Panc1 (cell line): ENCODE measurements at regions of chr12 and their contacts with region 1.

Region 1: DNA sequence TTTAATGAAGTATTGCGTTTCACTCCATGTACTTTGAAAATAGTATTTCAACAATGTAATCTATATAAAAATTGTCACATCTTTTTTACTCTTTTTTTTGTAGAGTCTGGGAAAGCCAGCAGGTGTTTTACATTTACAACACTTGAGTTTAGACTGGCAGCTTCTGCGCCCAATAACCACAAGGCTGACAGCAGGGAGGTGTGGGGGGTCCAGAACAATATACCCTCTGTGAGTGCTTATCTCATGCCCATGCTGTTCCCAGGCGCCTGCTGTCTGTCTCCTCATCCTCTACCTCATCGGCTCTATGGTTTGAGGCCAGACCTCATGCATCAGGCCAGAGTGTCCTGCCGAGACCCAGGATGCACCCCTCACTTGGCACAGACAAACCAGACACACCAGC is 24.9 kb downstream of the FBRSL1 start:
- DNase-seq: no peak
- ATAC-seq: no peak
- H3K4me3 ChIP-seq: no peak overlapping the region
- H3K27ac ChIP-seq: no peak overlapping the region
- H3K4me1 ChIP-seq: peaks cover 2% of the 10 kb centered on the region
- H3K27me3 ChIP-seq: no peaks in the 10 kb centered on the region
- CTCF ChIP-seq: no peak

Region 2: DNA sequence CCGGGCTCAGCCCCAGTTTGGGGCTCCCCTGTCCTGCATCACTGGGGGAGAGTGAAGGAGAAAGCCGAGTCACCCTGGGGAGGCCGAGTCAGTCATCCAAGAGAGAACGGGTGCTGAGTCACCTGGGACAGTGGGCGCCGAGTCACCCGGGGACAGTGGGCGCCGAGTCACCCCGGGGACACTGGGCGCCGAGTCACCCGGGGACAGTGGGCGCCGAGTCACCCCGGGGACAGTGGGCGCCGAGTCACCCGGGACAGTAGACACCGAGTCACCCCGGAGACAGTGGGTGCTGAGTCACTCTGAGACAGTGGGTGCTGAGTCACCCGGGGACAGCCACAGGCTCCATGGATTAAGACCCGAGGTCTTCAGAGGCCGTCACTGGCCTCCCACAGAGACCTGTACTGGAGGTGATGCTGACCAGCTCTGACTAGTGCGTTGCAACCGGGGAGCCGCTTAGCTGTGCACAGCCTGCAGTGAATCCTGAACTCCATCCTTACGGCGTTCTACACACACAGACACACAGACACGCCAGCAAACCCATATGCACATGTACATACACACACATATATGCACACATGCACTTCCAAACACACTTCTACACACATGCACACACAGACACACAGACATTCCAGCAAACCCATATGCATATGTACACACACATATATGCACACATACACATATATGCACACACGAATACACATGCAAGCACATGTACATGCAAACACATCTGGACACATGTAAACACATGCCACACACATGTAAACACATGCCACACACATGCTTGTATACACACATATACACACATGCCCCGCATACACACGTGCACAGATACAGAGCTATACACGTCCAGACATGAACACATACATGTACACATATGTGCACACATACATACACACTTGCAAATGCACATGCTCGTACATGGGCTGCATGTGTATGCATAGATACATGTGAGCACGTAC is 120.6 kb before region 1 on chr12:
- CTCF ChIA-PET with region 1: no interaction called
- POLR2A ChIA-PET with region 1: no interaction called
- in situ Hi-C with region 1: no loop called
- intact Hi-C with region 1: no loop called
- DNase-seq: no peak
- ATAC-seq: 0 out of 2 replicates have a peak, but pooled peaks have one; percentile 40
- H3K4me3 ChIP-seq: no peak overlapping the region
- H3K27ac ChIP-seq: no peak overlapping the region
- H3K4me1 ChIP-seq: no peaks in the 10 kb centered on the region
- H3K27me3 ChIP-seq: no peaks in the 10 kb centered on the region
- CTCF ChIP-seq: no peak

Region 3: GRCh38 chr12:132445884-132446632 is 68.8 kb before region 1 on chr12:
- CTCF ChIA-PET with region 1: no interaction called
- POLR2A ChIA-PET with region 1: interaction called, 10 read pairs
- in situ Hi-C with region 1: no loop called
- intact Hi-C with region 1: no loop called
- DNase-seq: peak; percentile 83
- ATAC-seq: peak; percentile 92
- H3K4me3 ChIP-seq: peak overlapping the region; percentile 85 to 88
- H3K27ac ChIP-seq: peak overlapping the region; percentile 96
- H3K4me1 ChIP-seq: peaks cover 4% of the 10 kb centered on the region; the same call in 1 of the 2 replicates
- H3K27me3 ChIP-seq: no peaks in the 10 kb centered on the region
- CTCF ChIP-seq: no peak

Region 4: GRCh38 chr12:132453361-132454192 is 61.3 kb before region 1 on chr12:
- CTCF ChIA-PET with region 1: no interaction called
- POLR2A ChIA-PET with region 1: interaction called, 13 read pairs
- in situ Hi-C with region 1: no loop called
- intact Hi-C with region 1: no loop called
- DNase-seq: no peak
- ATAC-seq: peak; percentile 72
- H3K4me3 ChIP-seq: no peak overlapping the region
- H3K27ac ChIP-seq: peak overlapping the region; percentile 65
- H3K4me1 ChIP-seq: peaks cover 8% of the 10 kb centered on the region
- H3K27me3 ChIP-seq: no peaks in the 10 kb centered on the region
- CTCF ChIP-seq: no peak

Region 5: GRCh38 chr12:132502149-132502877 is 12.5 kb before region 1 on chr12:
- CTCF ChIA-PET with region 1: no interaction called
- POLR2A ChIA-PET with region 1: no interaction called
- in situ Hi-C with region 1: no loop called
- intact Hi-C with region 1: no loop called
- DNase-seq: no peak
- ATAC-seq: no peak
- H3K4me3 ChIP-seq: no peak overlapping the region
- H3K27ac ChIP-seq: no peak overlapping the region
- H3K4me1 ChIP-seq: peaks cover 45% of the 10 kb centered on the region
- H3K27me3 ChIP-seq: no peaks in the 10 kb centered on the region
- CTCF ChIP-seq: no peak